ENCODE measurements at regions of chr11 and their contacts with region 1.

Region 1: GRCh38 chr11:13868710-13869397 is 93.7 kb upstream of the SPON1 start:
- DNase-seq: no peak
- H3K4me3 ChIP-seq: no peak overlapping the region
- H3K4me3 Mint-ChIP-seq: no peak overlapping the region
- H3K27ac Mint-ChIP-seq: no peak overlapping the region
- H3K4me1 ChIP-seq: no peaks in the 10 kb centered on the region
- H3K4me1 Mint-ChIP-seq: no peaks in the 10 kb centered on the region
- H3K27me3 ChIP-seq: no peaks in the 10 kb centered on the region
- H3K27me3 Mint-ChIP-seq: peaks cover 18% of the 10 kb centered on the region
- CTCF ChIP-seq: no peak

Region 2: DNA sequence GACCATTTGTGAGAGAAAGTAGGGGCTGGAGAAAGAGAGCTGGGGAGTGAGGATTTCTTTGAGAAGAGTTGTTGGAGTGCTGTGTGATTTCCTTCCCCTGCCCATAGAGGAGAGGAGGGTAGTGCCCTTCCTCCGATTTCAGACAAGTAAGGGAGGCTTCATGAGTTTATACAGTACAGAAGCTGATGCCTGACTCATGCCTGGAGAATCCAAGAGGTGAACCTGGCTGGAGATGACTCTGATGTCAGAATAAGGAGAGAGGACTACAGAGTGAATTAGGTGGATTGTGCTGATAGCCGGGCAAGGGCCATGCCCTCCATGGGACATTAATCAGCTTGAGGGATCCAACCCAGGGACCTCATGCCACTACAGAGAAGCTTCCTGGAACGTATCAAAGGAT is 108.7 kb before region 1 on chr11:
- CTCF ChIA-PET with region 1: no interaction called
- POLR2A ChIA-PET with region 1: no interaction called
- intact Hi-C with region 1: no loop called
- DNase-seq: no peak
- H3K4me3 ChIP-seq: no peak overlapping the region
- H3K4me3 Mint-ChIP-seq: no peak overlapping the region
- H3K27ac Mint-ChIP-seq: no peak overlapping the region
- H3K4me1 ChIP-seq: peaks cover 4% of the 10 kb centered on the region; the same call in 1 of the 2 replicates
- H3K4me1 Mint-ChIP-seq: no peaks in the 10 kb centered on the region
- H3K27me3 ChIP-seq: no peaks in the 10 kb centered on the region
- H3K27me3 Mint-ChIP-seq: no peaks in the 10 kb centered on the region
- CTCF ChIP-seq: no peak

Region 3: GRCh38 chr11:13818325-13818724 is 50.5 kb before region 1 on chr11:
- CTCF ChIA-PET with region 1: no interaction called
- POLR2A ChIA-PET with region 1: no interaction called
- intact Hi-C with region 1: no loop called
- DNase-seq: no peak
- H3K4me3 ChIP-seq: no peak overlapping the region
- H3K4me3 Mint-ChIP-seq: no peak overlapping the region
- H3K27ac Mint-ChIP-seq: no peak overlapping the region
- H3K4me1 ChIP-seq: no peaks in the 10 kb centered on the region
- H3K4me1 Mint-ChIP-seq: no peaks in the 10 kb centered on the region
- H3K27me3 ChIP-seq: no peaks in the 10 kb centered on the region; the same call in 1 of the 2 replicates
- H3K27me3 Mint-ChIP-seq: peaks cover 28% of the 10 kb centered on the region
- CTCF ChIP-seq: no peak

Region 4: DNA sequence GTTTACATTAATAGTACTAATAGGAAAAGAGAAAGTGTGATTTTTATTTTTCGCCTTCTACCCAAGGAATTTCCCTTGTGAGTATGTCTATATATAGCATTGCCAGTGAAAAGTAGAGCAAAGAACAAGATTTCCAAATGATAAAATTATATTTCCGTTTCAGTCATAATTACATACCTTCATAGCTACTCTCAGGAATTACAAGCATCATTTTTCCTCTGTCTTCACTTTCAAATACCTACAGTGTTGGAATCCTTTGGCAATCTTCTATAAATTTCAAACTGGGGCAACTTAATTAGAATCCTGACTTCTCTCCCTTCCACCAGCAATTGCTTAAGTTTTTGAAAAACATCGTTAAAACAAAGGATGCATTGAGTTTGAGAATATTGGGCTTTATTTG is 58.1 kb after region 1 on chr11:
- CTCF ChIA-PET with region 1: interaction called, 4 read pairs
- POLR2A ChIA-PET with region 1: interaction called, 10 read pairs
- intact Hi-C with region 1: no loop called
- DNase-seq: no peak
- H3K4me3 ChIP-seq: no peak overlapping the region
- H3K4me3 Mint-ChIP-seq: no peak overlapping the region
- H3K27ac Mint-ChIP-seq: no peak overlapping the region
- H3K4me1 ChIP-seq: no peaks in the 10 kb centered on the region; the same call in 1 of the 2 replicates
- H3K4me1 Mint-ChIP-seq: peaks cover 6% of the 10 kb centered on the region
- H3K27me3 ChIP-seq: no peaks in the 10 kb centered on the region; the same call in 1 of the 2 replicates
- H3K27me3 Mint-ChIP-seq: no peaks in the 10 kb centered on the region
- CTCF ChIP-seq: no peak